ENCODE measurements at regions of chr12 and their contacts with region 1.

Region 1: DNA sequence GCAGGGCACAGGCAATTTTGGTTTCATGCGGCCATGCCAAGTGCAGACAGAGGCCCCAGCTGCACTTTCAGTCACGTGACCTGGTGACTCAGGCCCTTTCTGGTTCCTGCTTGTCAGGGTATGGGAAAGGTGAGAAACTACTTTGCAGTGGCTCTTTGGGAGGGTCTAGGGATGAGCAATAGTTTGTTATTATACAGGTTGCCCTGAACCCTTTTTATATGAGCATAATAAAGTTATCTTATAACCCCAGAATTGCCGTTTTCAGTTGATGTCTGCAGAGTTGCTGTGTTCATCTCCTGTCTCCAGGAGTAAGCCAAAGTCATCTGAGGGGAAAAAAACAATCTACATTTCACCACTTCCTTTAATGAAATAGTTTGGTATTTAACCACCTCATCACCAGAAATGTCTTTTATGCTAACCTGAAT is 30.9 kb upstream of the EMP1 start:
- DNase-seq: peak; percentile 14 to 60 (median 46)
- ATAC-seq: peak; percentile 82
- H3K4me3 ChIP-seq: no peak overlapping the region
- H3K4me3 Mint-ChIP-seq: peak overlapping the region; percentile 5 to 63 (median 50)
- H3K27ac ChIP-seq: peak overlapping the region; percentile 1
- H3K27ac Mint-ChIP-seq: peak overlapping the region; percentile 11 to 82 (median 76)
- H3K4me1 ChIP-seq: peaks cover 13 to 24% of the 10 kb centered on the region in 2 donors
- H3K4me1 Mint-ChIP-seq: peaks cover 16 to 35% (median 23%) of the 10 kb centered on the region in 7 donors
- H3K27me3 ChIP-seq: no peaks in the 10 kb centered on the region
- H3K27me3 Mint-ChIP-seq: peaks cover 0 to 24% (median 0%) of the 10 kb centered on the region in 5 donors

Region 2: GRCh38 chr12:13196130-13196921 is 30.7 kb after region 1 on chr12 and contains the start of gene EMP1:
- CTCF ChIA-PET with region 1: no interaction called
- POLR2A ChIA-PET with region 1: no interaction called
- intact Hi-C with region 1: loop called (anchors 1 kb)
- DNase-seq: peak in 8 of 9 donors; percentile 34 to 78 (median 56)
- ATAC-seq: peak; percentile 89
- H3K4me3 ChIP-seq: peak within 1 kb of the TSS; percentile 18
- H3K4me3 Mint-ChIP-seq: peak within 1 kb of the TSS; percentile 69 to 91 (median 82)
- H3K27ac ChIP-seq: peak within 1 kb of the TSS; percentile 34
- H3K27ac Mint-ChIP-seq: peak within 1 kb of the TSS; percentile 36 to 92 (median 78)
- H3K4me1 ChIP-seq: peaks cover 8 to 11% of the 10 kb centered on the region in 2 donors
- H3K4me1 Mint-ChIP-seq: peaks cover 19 to 41% (median 22%) of the 10 kb centered on the region in 7 donors
- H3K27me3 ChIP-seq: no peaks in the 10 kb centered on the region
- H3K27me3 Mint-ChIP-seq: peaks cover 0 to 42% (median 4%) of the 10 kb centered on the region in 5 donors
- total RNA-seq, gene EMP1: 3.4 to 40.1 (median 4.4) TPM

Region 3: GRCh38 chr12:13229504-13229903 is 63.9 kb after region 1 on chr12:
- CTCF ChIA-PET with region 1: no interaction called
- POLR2A ChIA-PET with region 1: no interaction called
- intact Hi-C with region 1: no loop called
- DNase-seq: no peak
- ATAC-seq: no peak
- H3K4me3 ChIP-seq: no peak overlapping the region
- H3K4me3 Mint-ChIP-seq: no peak overlapping the region
- H3K27ac ChIP-seq: no peak overlapping the region
- H3K27ac Mint-ChIP-seq: no peak overlapping the region
- H3K4me1 ChIP-seq: no peaks in the 10 kb centered on the region
- H3K4me1 Mint-ChIP-seq: peaks cover 0 to 1% (median 0%) of the 10 kb centered on the region in 7 donors
- H3K27me3 ChIP-seq: peaks cover 0 to 6% of the 10 kb centered on the region in 2 donors
- H3K27me3 Mint-ChIP-seq: peaks cover 8 to 35% (median 16%) of the 10 kb centered on the region in 5 donors

Region 4: GRCh38 chr12:13390381-13390861 is 224.8 kb after region 1 on chr12:
- CTCF ChIA-PET with region 1: no interaction called
- POLR2A ChIA-PET with region 1: no interaction called
- intact Hi-C with region 1: no loop called
- DNase-seq: no peak
- ATAC-seq: no peak
- H3K4me3 ChIP-seq: no peak overlapping the region
- H3K4me3 Mint-ChIP-seq: no peak overlapping the region
- H3K27ac ChIP-seq: no peak overlapping the region
- H3K27ac Mint-ChIP-seq: no peak overlapping the region
- H3K4me1 ChIP-seq: no peaks in the 10 kb centered on the region
- H3K4me1 Mint-ChIP-seq: no peaks in the 10 kb centered on the region
- H3K27me3 ChIP-seq: no peaks in the 10 kb centered on the region
- H3K27me3 Mint-ChIP-seq: peaks cover 0 to 11% (median 4%) of the 10 kb centered on the region in 5 donors

Region 5: GRCh38 chr12:14018080-14018479 is 852.5 kb after region 1 on chr12:
- CTCF ChIA-PET with region 1: no interaction called
- POLR2A ChIA-PET with region 1: no interaction called
- intact Hi-C with region 1: no loop called
- DNase-seq: no peak
- ATAC-seq: no peak
- H3K4me3 ChIP-seq: no peak overlapping the region
- H3K4me3 Mint-ChIP-seq: no peak overlapping the region
- H3K27ac ChIP-seq: no peak overlapping the region
- H3K27ac Mint-ChIP-seq: no peak overlapping the region
- H3K4me1 ChIP-seq: no peaks in the 10 kb centered on the region
- H3K4me1 Mint-ChIP-seq: no peaks in the 10 kb centered on the region
- H3K27me3 ChIP-seq: no peaks in the 10 kb centered on the region
- H3K27me3 Mint-ChIP-seq: no peaks in the 10 kb centered on the region